HCT116 (cell line): ENCODE measurements at regions of chr2 and their contacts with region 1.

Region 1: DNA sequence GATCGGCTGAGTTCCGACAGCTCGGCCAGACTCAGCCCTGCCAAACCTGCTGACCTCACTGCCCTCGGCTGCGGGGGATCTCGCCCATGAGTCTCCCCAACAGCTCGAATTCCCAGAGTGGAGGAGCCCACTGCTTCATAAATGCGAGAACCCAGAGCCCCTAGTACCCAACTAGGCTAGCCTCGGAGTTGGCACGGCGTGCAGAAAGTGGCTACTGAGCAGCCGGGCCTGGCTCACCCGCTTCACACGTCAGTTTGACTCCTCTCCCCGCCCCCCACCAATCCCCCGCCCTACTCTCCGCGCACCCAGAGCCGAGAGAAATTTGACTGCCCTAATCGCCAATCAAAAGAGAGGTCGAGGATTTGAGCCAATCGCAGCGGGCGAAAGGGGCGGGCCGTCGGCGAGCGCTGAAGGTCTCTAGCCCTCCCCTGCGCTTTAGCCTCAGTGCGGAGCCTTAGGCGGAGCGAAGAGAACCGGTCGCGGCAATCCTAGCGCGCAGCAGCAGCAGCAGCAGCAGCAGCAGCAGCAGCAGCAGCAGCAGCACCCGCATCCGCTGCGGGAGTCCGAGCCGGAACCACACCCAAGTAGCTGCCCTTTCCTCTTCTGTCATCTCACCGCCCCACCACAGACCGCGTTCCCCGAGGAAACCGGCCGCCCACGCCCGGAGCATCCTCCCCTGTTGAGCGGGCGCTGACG is at the start of gene GLS:
- DNase-seq: peak; percentile 95
- ATAC-seq: peak; percentile 90
- H3K4me3 ChIP-seq: peak within 1 kb of the TSS; percentile 77 to 79
- H3K27ac ChIP-seq: peak within 1 kb of the TSS; percentile 86
- H3K4me1 ChIP-seq: peaks cover 17 to 21% of the 10 kb centered on the region in 2 experiments
- H3K27me3 ChIP-seq: no peaks in the 10 kb centered on the region
- CTCF ChIP-seq: no peak
- POLR2A ChIP-seq: peak; percentile 97
- RAD21 ChIP-seq: no peak
- total RNA-seq, gene GLS: 97.4 TPM

Region 2: GRCh38 chr2:190843874-190844699 is 36.4 kb before region 1 on chr2:
- CTCF ChIA-PET with region 1: no interaction called
- POLR2A ChIA-PET with region 1: no interaction called
- RAD21 ChIA-PET with region 1: no interaction called
- intact Hi-C with region 1: loop called (anchors 5 kb)
- DNase-seq: peak; percentile 85
- ATAC-seq: peak; percentile 81
- H3K4me3 ChIP-seq: peak overlapping the region in 1 of 2 experiments; percentile 34; a peak in 2 of 4 replicates
- H3K27ac ChIP-seq: peak overlapping the region; percentile 55; the same call in 1 of the 2 replicates
- H3K4me1 ChIP-seq: peaks cover 25 to 75% of the 10 kb centered on the region in 2 experiments
- H3K27me3 ChIP-seq: no peaks in the 10 kb centered on the region
- CTCF ChIP-seq: no peak
- POLR2A ChIP-seq: no peak
- RAD21 ChIP-seq: no peak; the same call in 1 of the 2 replicates